HEK293 (cell line): ENCODE measurements at regions of chr2 and their contacts with region 1.

Region 1: GRCh38 chr2:20446917-20447436 is at the start of gene RHOB:
- H3K4me3 ChIP-seq: peak within 1 kb of the TSS; percentile 90
- H3K27ac ChIP-seq: peak within 1 kb of the TSS; percentile 95
- H3K4me1 ChIP-seq: peaks cover 9% of the 10 kb centered on the region
- CTCF ChIP-seq: no peak

Region 2: GRCh38 chr2:20398956-20399567 is 47.9 kb before region 1 on chr2:
- CTCF ChIA-PET with region 1: interaction called, 9 read pairs
- POLR2A ChIA-PET with region 1: interaction called, 11 read pairs
- H3K4me3 ChIP-seq: no peak overlapping the region
- H3K27ac ChIP-seq: no peak overlapping the region
- H3K4me1 ChIP-seq: no peaks in the 10 kb centered on the region
- CTCF ChIP-seq: no peak

Region 3: DNA sequence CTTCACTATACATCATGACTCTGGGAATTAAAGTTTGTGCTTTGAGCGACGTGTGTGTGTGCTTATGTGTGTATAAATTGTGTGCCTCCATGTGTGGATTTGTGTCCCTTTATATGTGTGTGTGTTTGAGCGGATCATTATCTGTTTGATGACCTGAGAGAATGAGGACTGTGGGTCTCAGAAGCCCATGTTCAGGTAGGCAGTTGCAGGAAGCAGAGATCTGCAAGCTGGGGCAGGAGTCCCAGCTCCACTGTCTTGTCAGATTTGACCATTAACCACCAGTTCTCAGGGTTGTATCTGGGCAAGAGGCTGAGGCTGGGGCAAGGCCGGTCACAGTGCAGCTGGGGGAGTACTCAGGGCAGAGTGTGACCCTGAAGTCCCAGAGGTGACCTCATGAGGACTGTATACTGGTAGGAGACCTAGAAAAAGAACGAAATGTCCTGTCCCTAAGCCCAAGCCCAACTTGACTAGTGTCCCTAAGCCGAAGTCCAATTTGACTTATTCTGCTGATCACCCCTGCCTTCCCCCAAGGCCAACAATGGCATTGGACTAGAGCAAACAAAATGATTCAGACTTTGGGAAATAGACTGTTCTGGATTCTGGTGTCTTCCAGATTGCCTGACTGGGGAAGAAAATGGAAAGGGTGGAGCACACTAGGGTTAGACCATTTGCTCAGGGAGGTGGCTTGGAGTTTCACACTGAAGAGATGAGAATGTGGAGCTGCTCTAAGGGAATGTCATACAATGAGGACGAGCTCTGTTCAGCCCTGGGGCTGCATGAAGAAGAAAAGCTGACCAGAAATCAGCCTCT is 28.0 kb after region 1 on chr2:
- CTCF ChIA-PET with region 1: no interaction called
- POLR2A ChIA-PET with region 1: interaction called, 25 read pairs
- H3K4me3 ChIP-seq: no peak overlapping the region
- H3K27ac ChIP-seq: no peak overlapping the region
- H3K4me1 ChIP-seq: no peaks in the 10 kb centered on the region
- CTCF ChIP-seq: no peak

Region 4: DNA sequence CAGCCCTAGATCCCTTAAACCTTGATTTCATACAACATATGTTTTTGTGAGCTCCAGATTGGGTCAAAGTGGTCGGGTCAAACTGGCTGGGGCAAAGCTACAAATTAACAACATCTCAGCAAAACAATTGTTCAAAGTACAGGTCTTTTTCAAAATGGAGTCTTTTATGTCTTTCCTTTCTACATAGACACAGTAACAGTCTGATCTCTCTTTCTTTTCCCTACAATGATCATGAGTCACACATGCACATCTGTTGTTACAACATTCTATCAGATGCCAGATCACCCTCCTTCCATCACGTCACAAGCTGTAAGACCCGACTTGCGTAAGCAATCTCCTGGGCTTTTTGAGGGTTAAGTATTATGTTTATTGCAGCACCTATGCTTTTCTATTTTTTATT is 55.0 kb after region 1 on chr2:
- CTCF ChIA-PET with region 1: interaction called, 3 read pairs
- POLR2A ChIA-PET with region 1: interaction called, 57 read pairs
- H3K4me3 ChIP-seq: no peak overlapping the region
- H3K27ac ChIP-seq: no peak overlapping the region
- H3K4me1 ChIP-seq: no peaks in the 10 kb centered on the region
- CTCF ChIP-seq: no peak

Region 5: GRCh38 chr2:20561701-20562454 is 114.9 kb after region 1 on chr2:
- CTCF ChIA-PET with region 1: interaction called, 3 read pairs
- POLR2A ChIA-PET with region 1: interaction called, 29 read pairs
- H3K4me3 ChIP-seq: no peak overlapping the region
- H3K27ac ChIP-seq: no peak overlapping the region
- H3K4me1 ChIP-seq: no peaks in the 10 kb centered on the region
- CTCF ChIP-seq: no peak

Region 6: DNA sequence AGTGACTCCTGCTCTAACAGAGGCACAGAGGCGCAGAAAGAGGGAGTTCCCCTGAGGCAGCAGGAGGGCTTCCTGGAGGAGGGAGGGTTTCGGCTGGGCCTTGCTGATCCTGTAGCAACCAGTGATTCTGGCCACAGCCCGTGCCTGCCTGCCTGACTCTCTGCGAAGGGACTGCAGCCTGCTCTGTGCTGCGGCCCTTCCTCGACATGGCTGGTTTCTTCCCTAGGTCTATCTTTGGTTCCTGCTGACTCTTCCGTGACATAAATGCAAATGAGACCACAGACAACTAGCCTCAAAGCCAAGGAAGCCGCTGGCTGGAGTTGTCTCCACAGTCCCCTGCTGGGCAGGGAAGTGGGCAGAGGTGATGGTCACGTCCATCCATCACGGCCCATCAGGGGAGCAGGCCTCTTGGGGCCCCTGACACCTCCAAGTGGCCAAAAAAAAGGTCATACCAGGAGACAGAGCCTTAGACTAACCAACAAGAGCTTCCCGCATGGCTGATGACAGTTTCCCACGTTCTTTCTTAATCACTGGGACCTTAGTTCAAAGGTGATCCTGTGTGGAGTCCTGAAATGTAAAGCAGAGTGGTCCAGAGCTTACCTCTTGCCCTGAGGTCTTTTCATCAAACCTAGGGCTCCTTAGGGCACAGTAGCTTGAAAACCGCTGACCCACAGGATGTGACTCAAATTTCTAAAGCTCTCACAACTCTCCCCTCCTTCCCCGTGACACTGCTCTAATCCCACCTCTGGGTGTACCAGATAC is 148.6 kb after region 1 on chr2:
- CTCF ChIA-PET with region 1: interaction called, 6 read pairs
- POLR2A ChIA-PET with region 1: interaction called, 29 read pairs
- H3K4me3 ChIP-seq: no peak overlapping the region
- H3K27ac ChIP-seq: no peak overlapping the region
- H3K4me1 ChIP-seq: no peaks in the 10 kb centered on the region
- CTCF ChIP-seq: no peak

Region 7: GRCh38 chr2:20642055-20642971 is 195.3 kb after region 1 on chr2:
- CTCF ChIA-PET with region 1: interaction called, 93 read pairs
- POLR2A ChIA-PET with region 1: interaction called, 62 read pairs
- H3K4me3 ChIP-seq: no peak overlapping the region
- H3K27ac ChIP-seq: no peak overlapping the region
- H3K4me1 ChIP-seq: no peaks in the 10 kb centered on the region
- CTCF ChIP-seq: peak; percentile 88